ENCODE measurements at regions of chr19 and their contacts with region 1.

Region 1: DNA sequence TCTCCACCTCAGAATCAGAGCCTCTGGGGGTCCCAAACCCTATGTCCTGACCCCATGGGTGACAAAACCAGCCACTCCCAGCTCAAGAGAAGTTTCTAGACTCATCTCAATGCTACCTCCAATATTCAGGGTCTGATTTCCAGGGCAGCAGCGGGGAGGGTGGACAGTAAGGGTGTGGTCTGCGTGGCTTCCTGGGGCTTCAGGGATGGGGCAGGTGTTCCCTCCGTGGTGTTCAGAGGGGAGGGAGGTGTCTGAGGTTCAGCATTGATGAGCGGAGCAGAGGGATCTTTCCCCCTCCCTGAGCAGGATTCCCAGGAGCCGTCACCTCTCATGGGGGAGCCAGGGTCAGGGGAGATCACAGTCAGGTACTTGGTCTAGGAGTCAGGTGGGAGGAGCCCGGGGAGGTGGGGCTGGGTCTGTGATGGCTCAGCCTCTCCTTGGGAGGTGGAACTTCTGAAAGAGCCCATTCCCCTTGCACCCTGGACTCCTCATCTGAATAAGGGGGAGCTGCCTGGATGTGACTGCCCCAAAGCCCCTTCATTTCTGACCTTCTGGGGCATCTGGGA is 2.9 kb downstream of the LILRA2 start:
- DNase-seq: no peak

Region 2: DNA sequence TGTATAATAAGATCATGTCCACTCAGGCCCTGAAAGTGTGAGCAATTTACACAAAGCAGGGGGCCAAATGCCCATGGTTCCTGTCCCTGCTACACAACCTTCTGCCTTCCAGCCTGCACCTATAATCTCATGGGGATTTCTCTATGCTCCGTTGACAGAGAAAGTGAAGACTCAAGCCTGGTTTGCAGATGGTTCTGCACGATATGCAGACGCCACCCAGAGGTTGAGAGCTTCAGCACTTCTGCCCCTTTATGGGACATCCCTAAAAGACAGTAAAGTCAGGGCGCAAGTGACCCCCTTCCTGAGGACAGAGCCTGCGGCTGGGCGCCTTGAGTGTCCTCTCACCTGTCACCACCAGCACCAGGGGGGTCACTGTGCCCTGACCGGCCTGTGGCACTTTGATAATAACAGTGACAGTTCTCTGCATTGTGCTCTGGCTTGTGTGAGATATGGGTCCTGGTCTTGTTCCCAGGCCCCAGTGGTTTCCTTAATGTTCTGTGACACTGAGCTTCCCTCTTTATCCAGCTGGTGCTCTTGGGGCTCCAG is 278.7 kb before region 1 on chr19:
- intact Hi-C with region 1: loop called (anchors 2 kb)
- DNase-seq: peak in 8 of 42 donors; percentile 5 to 40 (median 18)

Region 3: GRCh38 chr19:54418030-54418929 is 158.2 kb before region 1 on chr19:
- intact Hi-C with region 1: no loop called
- DNase-seq: peak in 33 of 42 donors; percentile 43 to 81 (median 61)